K562 (cell line): ENCODE measurements at regions of chr5 and their contacts with region 1.

Region 1: DNA sequence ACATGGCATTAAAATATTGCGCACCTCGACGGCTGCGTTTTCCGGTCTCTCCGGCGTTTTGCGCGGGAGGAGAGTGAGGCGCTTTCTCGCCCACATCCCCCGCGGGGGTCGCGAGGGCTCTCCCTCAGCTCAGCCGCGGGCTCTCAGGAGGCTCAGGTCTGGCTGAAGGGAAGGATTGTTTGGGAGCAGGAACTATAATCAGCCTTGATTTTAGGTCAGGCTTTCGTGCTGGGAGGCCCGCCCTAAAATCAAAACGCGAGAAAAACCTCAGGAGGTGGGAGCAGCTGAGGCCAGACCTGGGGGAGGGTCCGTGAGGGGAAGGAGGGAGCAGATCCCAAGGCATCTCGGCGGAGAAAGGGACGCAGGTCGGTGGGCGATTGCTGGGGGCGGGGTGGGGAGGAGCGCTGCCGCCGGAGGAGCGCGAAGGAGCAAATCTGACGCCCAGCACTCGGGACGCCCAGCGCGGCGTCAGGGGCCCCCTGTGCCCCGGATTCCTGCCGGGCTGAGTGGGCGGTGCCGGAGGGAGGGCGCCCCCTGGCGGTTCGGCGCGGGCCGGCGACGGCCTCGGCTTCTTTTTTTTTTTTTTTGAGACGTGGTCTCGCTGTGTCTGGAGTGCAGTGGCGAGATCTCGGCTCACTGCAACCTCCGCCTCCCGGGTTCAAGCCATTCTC is 18.7 kb upstream of the RNF130 start:
- DNase-seq: peak; percentile 78 to 84 (median 81)
- ATAC-seq: peak; percentile 84
- H3K4me3 ChIP-seq: peak overlapping the region; percentile 45
- H3K27ac ChIP-seq: no peak overlapping the region
- H3K4me1 ChIP-seq: peaks cover 38 to 45% of the 10 kb centered on the region in 2 experiments
- H3K27me3 ChIP-seq: no peaks in the 10 kb centered on the region
- CTCF ChIP-seq: peak; percentile 79 to 90 (median 89)
- EP300 ChIP-seq: no peak
- POLR2A ChIP-seq: no peak
- RAD21 ChIP-seq: peak; percentile 46 to 61; a peak in 3 of 4 replicates

Region 2: DNA sequence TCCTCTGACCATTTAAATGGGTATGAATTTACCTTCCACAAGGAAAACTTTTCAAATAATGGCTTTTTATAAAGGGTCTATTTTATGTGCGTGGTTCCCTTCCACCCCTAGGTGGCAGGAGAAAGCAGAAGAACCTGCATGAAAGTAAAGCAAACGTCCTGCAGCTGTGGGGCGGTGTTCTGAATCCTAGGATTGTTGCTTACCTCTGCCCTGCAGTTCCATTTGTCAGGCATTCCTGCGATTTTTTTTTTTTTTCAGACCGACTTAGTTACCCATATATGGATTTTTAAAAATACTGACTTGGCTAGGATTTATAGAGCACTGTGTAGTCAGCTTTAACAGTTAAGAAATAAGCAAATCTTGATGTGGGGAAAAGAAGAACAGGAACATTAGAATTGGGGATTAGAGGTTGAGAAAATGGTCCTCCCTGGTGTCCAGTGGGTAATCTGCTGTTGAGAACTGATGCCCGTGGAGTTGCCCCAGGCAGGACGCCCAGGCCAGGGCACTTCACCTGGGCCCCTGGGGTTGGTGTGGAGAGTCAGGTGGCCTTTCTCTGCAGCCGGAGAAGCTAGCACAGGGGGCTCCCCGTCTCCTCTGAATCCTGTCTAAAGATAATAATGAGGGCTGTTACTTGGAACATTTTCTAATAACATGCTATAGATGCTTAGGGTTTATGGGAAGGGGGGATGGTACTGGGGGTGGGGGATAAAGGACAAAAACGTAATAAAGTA is 326.9 kb before region 1 on chr5:
- CTCF ChIA-PET with region 1: interaction called, 4 read pairs
- POLR2A ChIA-PET with region 1: no interaction called
- in situ Hi-C with region 1: no loop called
- intact Hi-C with region 1: loop called (anchors 5 kb)
- DNase-seq: peak; percentile 75 to 84 (median 79)
- ATAC-seq: peak; percentile 82
- H3K4me3 ChIP-seq: no peak overlapping the region
- H3K27ac ChIP-seq: no peak overlapping the region
- H3K4me1 ChIP-seq: peaks cover 27 to 52% of the 10 kb centered on the region in 2 experiments
- H3K27me3 ChIP-seq: no peaks in the 10 kb centered on the region
- CTCF ChIP-seq: peak; percentile 87 to 99 (median 98)
- EP300 ChIP-seq: no peak
- POLR2A ChIP-seq: no peak
- RAD21 ChIP-seq: peak; percentile 73 to 79

Region 3: DNA sequence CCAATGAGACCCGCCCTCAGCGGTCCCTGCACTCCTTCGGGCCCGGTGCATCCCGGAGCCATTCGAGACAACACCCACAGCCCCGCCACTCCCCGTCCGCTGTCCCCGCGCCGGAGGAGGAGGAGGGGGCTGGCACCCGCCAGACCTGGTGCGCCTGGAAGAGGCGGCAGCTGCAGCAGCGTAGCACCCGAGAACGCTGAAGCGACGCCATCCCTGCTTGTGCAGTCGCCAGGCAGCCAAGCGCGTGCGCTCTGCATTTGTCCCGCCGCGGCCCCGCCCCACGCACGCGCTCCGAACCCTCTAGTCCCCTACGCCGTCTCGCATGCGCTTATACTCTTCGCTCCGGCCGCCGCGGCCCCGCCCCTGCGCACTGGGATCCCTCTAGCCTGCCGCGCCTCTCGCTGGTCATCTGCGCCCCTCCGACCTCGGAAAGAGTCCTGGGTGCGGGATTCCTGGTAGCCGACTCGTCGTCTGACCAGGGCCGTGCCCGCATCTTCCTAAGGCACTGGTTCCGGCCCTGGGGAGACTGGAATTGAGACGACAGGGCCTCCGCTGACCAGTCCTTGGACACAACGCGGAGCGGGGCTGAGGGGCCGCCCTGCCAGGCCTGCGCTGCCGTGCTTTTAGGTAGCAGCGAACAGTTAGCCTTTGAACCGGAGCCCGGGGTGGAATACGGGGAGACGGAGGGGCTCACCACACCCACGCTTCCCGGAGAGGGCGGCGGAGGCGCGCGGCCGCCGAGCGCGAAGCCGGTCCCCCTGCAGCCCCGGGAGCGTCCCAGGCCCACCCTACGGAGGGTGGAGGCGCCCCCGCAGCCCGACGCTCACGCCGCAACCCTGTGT is 231.4 kb before region 1 on chr5 and contains the start of gene MRNIP:
- CTCF ChIA-PET with region 1: no interaction called
- POLR2A ChIA-PET with region 1: no interaction called
- in situ Hi-C with region 1: no loop called
- intact Hi-C with region 1: loop called (anchors 5 kb)
- DNase-seq: peak; percentile 92 to 98 (median 94)
- ATAC-seq: peak; percentile 98
- H3K4me3 ChIP-seq: peak within 1 kb of the TSS; percentile 94
- H3K27ac ChIP-seq: peak within 1 kb of the TSS; percentile 84
- H3K4me1 ChIP-seq: peaks cover 6 to 25% of the 10 kb centered on the region in 2 experiments; a peak in 4 of 5 replicates
- H3K27me3 ChIP-seq: no peaks in the 10 kb centered on the region
- CTCF ChIP-seq: peak; percentile 14 to 49 (median 17); a peak in 3 of 6 replicates
- EP300 ChIP-seq: no peak
- POLR2A ChIP-seq: peak; percentile 86
- RAD21 ChIP-seq: peak; percentile 38 to 42; a peak in 3 of 4 replicates
- polyA plus RNA-seq, gene MRNIP: 3.6 to 6.2 TPM

Region 4: GRCh38 chr5:179986328-179986727 is 103.9 kb before region 1 on chr5:
- CTCF ChIA-PET with region 1: no interaction called
- POLR2A ChIA-PET with region 1: no interaction called
- in situ Hi-C with region 1: no loop called
- intact Hi-C with region 1: loop called (anchors 5 kb)
- DNase-seq: peak in 2 of 4 experiments; percentile 22 to 29
- ATAC-seq: peak; percentile 61
- H3K4me3 ChIP-seq: no peak overlapping the region
- H3K27ac ChIP-seq: no peak overlapping the region
- H3K4me1 ChIP-seq: peaks cover 0 to 7% of the 10 kb centered on the region in 2 experiments; a peak in 2 of 5 replicates
- H3K27me3 ChIP-seq: no peaks in the 10 kb centered on the region
- CTCF ChIP-seq: peak in 2 of 3 experiments; percentile 3 to 53; a peak in 3 of 6 replicates
- EP300 ChIP-seq: no peak
- POLR2A ChIP-seq: no peak
- RAD21 ChIP-seq: peak in 1 of 2 experiments; percentile 71; a peak in 2 of 4 replicates